GM18951 (cell line): ENCODE measurements at regions of chrX and their contacts with region 1.

Region 1: GRCh38 chrX:13487731-13488523 is 81.5 kb upstream of the EGFL6 start:
- POLR2A ChIP-seq: no peak

Region 2: DNA sequence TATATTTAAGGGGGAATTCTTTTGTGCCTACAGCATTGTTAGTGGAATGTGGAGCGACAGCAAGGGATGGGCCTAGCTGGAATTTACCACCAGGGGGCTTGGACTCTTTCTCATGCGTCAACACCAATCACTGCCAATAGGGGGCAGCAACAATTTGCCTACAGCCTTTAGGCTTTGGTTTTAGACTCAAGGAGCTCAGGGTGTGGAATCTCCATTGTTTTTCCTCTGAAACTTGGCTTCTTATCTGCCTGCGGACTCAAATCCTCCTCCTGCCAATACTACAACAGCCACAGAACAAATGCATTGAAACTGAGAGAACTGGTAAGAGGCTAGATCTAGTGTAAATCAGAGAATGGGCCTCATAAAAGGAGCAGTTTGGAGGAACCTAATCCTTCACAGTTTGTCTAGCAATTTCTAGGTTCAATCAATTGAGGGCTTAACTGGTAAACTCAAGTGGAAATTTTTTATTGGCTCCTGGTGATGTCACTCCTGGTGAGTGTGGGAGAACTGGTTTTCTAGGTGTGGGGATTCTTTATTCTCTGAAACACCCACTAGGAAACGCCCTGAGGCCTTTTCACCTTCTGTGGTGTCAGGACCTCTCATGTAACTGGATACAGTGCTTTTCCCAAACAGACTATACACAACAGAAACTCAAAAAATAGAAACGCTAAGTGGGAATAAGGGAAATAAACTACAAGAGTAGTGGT is 540.9 kb before region 1 on chrX:
- in situ Hi-C with region 1: loop called (anchors 10 kb)
- POLR2A ChIP-seq: no peak

Region 3: GRCh38 chrX:13876652-13877051 is 388.7 kb after region 1 on chrX:
- in situ Hi-C with region 1: no loop called
- POLR2A ChIP-seq: no peak

Region 4: GRCh38 chrX:14095702-14096101 is 607.8 kb after region 1 on chrX:
- in situ Hi-C with region 1: no loop called
- POLR2A ChIP-seq: no peak